ENCODE measurements at regions of chr5 and their contacts with region 1.

Region 1: DNA sequence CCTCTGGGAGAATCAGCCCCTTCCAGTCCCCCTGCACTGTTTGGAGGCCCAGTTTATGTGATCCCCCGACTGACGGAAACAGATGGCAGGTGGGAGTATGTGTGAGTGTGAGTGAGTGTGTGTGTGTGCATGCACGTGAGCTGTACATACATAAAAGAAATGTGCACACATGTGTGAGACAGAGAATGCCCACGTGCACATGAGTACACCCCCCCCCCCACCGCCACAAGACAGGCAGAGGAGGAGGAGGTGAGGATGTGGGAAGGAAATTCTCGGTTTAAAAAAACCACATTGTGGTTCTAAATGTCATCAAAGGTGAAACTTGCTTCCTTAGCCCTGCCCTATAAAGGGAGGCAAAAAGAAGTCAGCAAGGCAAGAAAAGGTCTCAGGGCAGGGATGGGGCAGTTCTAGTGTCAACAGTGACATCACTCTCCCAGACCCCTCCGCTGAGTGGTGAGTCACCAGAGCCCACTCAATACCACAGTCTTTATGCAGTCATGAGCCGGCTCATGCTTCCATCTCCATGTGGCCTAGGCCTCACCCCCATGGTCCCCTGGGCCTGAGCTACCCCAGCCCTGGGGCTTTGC is 79.2 kb upstream of the HSPA9 start:
- DNase-seq: peak; percentile 50
- H3K4me3 Mint-ChIP-seq: peak overlapping the region; percentile 54
- H3K27ac Mint-ChIP-seq: peak overlapping the region; percentile 81
- H3K4me1 Mint-ChIP-seq: peaks cover 19% of the 10 kb centered on the region
- H3K27me3 Mint-ChIP-seq: peaks cover 77% of the 10 kb centered on the region

Region 2: DNA sequence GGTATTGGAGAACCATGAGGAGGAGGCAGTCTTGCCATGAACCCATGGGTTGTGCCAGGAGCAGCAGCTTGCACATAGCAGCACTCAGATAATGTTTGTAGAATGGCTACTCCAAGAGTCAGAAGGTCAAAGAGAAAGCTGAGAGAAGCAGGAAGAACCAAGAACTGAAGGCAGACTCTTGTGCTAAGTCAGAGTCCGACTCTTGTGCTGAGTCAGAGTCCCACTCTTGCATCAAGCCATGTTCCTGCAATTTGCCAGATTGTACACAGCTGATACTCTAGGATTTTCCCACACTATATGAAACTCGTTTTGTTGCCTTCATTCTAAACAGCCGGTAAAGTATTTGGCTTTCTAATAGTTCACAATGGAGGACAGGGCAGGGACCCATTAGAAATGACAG is 52.9 kb before region 1 on chr5:
- intact Hi-C with region 1: loop called (anchors 5 kb)
- DNase-seq: no peak
- H3K4me3 Mint-ChIP-seq: no peak overlapping the region
- H3K27ac Mint-ChIP-seq: no peak overlapping the region
- H3K4me1 Mint-ChIP-seq: peaks cover 20% of the 10 kb centered on the region
- H3K27me3 Mint-ChIP-seq: peaks cover 74% of the 10 kb centered on the region

Region 3: GRCh38 chr5:138737494-138738265 is 83.3 kb after region 1 on chr5:
- intact Hi-C with region 1: loop called (anchors 1 kb)
- DNase-seq: no peak
- H3K4me3 Mint-ChIP-seq: no peak overlapping the region
- H3K27ac Mint-ChIP-seq: no peak overlapping the region
- H3K4me1 Mint-ChIP-seq: peaks cover 29% of the 10 kb centered on the region
- H3K27me3 Mint-ChIP-seq: peaks cover 22% of the 10 kb centered on the region

Region 4: DNA sequence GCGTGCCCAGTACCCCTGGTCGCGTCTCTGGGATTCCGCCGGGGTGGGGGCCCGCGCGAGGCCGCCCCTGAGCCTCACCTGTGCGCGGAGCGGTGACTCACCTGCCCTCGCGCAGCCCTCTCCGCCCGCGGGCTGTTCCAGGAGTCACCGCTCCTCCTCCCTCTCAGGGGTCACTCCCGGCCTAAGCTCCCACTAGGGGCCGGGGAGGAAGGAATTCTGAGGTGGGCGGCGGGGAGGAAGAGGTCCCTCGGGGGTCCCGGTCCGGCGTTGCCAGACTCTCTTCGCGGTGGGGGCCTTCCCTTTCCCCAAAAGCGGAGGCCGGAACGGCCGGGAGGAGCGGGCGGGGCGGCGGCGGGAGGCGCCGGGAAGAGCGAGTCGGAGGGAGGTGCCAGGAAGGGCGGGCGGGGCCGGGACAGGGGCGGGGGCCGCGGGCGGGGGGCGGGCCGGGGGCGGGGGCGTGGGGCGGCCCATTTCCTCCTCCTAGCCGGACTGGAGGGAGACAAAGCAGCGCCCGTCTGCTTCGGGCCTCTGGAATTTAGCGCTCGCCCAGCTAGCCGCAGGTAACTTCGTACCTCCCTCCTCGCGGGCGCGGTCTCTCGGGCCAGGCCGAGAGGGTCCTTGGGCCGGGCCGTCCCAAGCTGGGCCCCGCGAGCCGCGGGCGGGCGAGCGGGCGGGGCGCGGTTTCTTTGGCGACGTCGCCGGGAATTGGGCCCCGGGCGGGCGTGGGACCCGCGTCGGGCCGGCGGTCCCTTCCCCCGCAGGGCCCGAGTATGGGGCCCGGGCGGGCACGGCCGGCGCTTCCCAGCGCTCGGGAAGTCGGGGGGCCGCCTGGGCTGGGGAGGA is 98.8 kb after region 1 on chr5 and contains the start of gene CTNNA1:
- intact Hi-C with region 1: loop called (anchors 2 kb)
- DNase-seq: peak; percentile 48
- H3K4me3 Mint-ChIP-seq: peak within 1 kb of the TSS; percentile 86
- H3K27ac Mint-ChIP-seq: peak within 1 kb of the TSS; percentile 56
- H3K4me1 Mint-ChIP-seq: peaks cover 37% of the 10 kb centered on the region
- H3K27me3 Mint-ChIP-seq: peaks cover 22% of the 10 kb centered on the region
- total RNA-seq, gene CTNNA1: 56.6 and 58.0 TPM in 2 replicates

Region 5: GRCh38 chr5:139147483-139148087 is 493.2 kb after region 1 on chr5:
- intact Hi-C with region 1: loop called (anchors 1 kb)
- DNase-seq: no peak
- H3K4me3 Mint-ChIP-seq: no peak overlapping the region
- H3K27ac Mint-ChIP-seq: no peak overlapping the region
- H3K4me1 Mint-ChIP-seq: peaks cover 23% of the 10 kb centered on the region
- H3K27me3 Mint-ChIP-seq: no peaks in the 10 kb centered on the region

Region 6: DNA sequence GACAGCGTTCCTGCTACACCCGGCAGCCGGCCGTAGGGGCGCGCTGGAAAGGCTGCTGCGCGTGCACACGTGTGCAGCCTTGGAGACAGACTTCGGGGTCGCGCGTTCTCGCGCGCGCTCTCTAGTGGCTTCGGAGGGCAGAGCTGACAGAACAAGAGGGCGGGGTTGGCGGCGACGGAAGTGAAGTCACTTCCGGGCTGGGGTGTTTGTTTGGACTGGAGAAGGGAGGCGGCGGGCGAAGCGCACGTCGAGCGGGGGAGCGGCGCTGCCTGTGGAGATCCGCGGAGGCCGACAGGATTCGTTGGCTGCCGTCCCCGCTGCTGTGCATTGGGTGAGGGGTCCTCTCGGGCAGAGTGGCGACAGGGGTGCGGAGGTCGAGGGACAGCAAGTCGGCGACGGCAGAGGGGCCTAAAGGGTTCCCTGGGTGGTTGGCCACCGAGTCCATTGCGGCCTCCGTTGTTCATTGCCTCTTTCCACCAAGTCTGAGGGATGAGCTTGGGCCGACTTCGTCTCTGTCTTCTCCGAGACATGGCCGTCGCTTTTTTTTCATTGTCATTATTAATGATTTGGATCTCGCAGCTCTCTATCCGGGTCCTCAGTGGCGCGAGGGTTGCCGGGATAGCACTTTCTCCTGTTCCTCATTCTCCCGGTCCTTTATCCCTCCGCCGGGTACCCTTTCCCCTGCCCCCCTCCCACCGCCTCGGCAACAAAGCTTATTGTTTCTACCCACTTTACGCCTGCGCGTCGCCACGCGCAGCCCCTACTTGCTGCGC is 687.5 kb after region 1 on chr5 and contains the start of gene PAIP2:
- intact Hi-C with region 1: no loop called
- DNase-seq: peak; percentile 95
- H3K4me3 Mint-ChIP-seq: peak within 1 kb of the TSS; percentile 94
- H3K27ac Mint-ChIP-seq: peak within 1 kb of the TSS; percentile 95
- H3K4me1 Mint-ChIP-seq: peaks cover 46% of the 10 kb centered on the region
- H3K27me3 Mint-ChIP-seq: no peaks in the 10 kb centered on the region
- total RNA-seq, gene PAIP2: 88.4 and 97.3 TPM in 2 replicates